H1 (cell line): ENCODE measurements at regions of chr19 and their contacts with region 1.

Region 1: GRCh38 chr19:4197625-4198466 is 15.4 kb downstream of the ANKRD24 start:
- DNase-seq: peak in 1 of 2 experiments; percentile 80
- H3K4me3 ChIP-seq: peak overlapping the region; percentile 23 to 87 (median 47); a peak in 7 of 8 replicates
- H3K27ac ChIP-seq: no peak overlapping the region
- H3K4me1 ChIP-seq: peaks cover 0 to 2% (median 0%) of the 10 kb centered on the region in 4 experiments; a peak in 3 of 7 replicates
- H3K27me3 ChIP-seq: peaks cover 0 to 7% (median 3%) of the 10 kb centered on the region in 4 experiments; a peak in 2 of 7 replicates
- CTCF ChIP-seq: no peak
- EP300 ChIP-seq: no peak; a peak in 1 of 3 replicates
- POLR2A ChIP-seq: no peak
- RAD21 ChIP-seq: no peak

Region 2: DNA sequence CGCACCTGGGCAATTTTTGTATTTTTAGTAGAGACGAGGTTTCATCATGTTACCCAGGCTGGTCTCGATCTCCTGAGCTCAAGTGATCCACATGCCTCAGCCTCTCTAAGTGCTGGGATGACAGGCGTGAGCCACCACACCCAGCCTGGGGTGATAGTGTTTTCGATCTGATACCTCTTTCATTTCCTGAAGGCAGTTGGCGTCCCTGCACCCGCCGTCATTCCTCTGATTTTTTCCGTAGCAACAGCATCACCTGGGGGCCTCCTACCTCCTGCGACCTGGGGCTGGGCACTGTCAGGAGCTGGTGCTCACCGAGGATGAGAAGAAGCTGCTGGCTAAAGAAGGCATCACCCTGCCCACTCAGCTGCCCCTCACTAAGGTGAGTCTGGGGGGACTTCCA is 33.6 kb before region 1 on chr19:
- CTCF ChIA-PET with region 1: interaction called, 91 read pairs
- POLR2A ChIA-PET with region 1: no interaction called
- DNase-seq: no peak
- H3K4me3 ChIP-seq: no peak overlapping the region
- H3K27ac ChIP-seq: no peak overlapping the region
- H3K4me1 ChIP-seq: no peaks in the 10 kb centered on the region
- H3K27me3 ChIP-seq: peaks cover 0 to 2% (median 0%) of the 10 kb centered on the region in 4 experiments; a peak in 2 of 7 replicates
- CTCF ChIP-seq: no peak
- EP300 ChIP-seq: no peak
- POLR2A ChIP-seq: no peak
- RAD21 ChIP-seq: no peak

Region 3: DNA sequence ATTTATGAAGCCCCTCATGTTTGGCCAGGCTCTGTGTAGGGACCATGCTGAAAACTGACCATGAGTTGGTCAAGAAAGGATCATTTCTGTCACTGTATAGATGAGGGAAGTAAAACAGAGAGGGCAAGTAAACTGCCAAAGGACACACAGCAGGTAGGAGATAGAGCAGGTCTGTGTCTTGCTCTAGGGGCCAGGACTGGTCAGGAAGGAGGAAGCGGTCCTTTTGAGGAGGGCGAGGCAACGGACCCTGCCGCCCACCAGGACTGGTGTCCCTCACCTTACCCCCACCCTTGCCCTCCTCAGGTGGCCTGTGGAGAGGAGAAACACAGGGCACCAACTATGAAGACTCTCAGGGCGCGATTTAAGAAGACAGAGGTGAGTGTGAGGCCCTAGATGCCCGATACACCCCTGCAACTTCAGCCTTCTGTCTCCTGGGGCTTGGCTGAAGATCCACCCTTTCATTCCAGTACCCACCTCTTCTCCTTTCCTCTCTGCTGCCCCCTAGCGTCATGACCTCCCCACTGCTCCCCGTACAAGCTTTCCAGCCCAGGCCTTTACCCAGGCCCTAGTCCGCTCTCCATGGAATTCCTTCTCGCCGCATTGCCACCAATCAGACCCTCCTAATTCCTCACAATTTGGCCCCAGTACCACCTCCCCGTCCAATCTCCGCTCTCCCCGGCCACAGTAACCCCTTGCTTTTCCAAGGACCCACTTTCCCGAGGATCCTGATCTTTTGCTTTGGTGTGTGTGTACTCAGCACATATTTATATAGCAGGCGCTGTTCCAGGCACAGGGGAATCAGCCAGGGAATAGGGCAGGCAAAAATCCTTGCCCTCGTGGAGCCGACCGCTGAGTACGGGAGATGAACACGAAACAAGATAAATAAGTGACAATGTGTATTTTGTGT is 11.5 kb before region 1 on chr19:
- CTCF ChIA-PET with region 1: interaction called, 14 read pairs
- POLR2A ChIA-PET with region 1: interaction called, 4 read pairs
- DNase-seq: peak; percentile 66 to 99
- H3K4me3 ChIP-seq: no peak overlapping the region
- H3K27ac ChIP-seq: no peak overlapping the region
- H3K4me1 ChIP-seq: peaks cover 0 to 3% (median under 1%) of the 10 kb centered on the region in 4 experiments; a peak in 3 of 7 replicates
- H3K27me3 ChIP-seq: 0 out of 7 replicates have a peak, but pooled peaks cover 0 to 2% (median 0%) of the 10 kb centered on the region in 4 experiments
- CTCF ChIP-seq: peak; percentile 77 to 97 (median 82)
- EP300 ChIP-seq: no peak
- POLR2A ChIP-seq: no peak
- RAD21 ChIP-seq: peak; percentile 55 to 68

Region 4: DNA sequence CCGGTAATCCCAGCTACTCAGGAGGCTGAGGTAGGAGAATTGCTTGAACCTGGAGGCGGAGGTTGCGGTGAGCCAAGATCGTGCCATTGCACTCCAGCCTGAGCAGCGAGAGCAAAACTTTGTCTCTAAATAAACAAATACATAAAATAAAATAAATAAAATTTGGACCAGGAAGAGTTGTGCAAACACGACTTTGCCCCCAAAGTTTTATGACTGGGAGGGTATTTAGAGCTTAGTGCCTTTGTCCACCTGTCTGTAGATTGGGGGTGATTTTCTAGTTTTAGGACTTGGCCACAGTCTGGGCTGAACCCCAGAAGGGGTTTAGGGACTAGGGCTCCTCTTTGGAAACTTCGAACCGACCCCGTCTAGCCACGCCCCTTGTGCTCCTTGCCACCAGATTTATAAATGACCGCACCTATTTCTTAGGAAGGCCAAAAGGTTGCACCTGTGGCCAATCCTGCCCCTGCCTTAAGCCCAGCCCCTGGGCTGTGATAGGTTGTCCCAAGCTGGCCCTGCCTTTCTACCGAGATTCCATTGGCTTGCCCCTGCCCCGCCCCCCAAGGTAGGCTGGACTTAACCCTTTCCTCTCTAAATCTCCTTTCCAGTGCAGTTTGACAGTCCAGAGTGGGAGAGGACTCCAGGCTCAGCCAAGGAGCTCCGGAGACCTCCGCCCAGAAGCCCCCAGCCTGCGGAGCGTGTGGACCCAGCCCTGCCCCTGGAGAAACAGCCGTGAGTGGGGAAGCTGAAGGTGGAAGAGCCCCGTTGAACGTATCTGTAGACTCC is 86.5 kb after region 1 on chr19:
- CTCF ChIA-PET with region 1: no interaction called
- POLR2A ChIA-PET with region 1: no interaction called
- DNase-seq: peak; percentile 71 to 89
- H3K4me3 ChIP-seq: peak overlapping the region; percentile 7 to 46 (median 16); a peak in 5 of 8 replicates
- H3K27ac ChIP-seq: no peak overlapping the region
- H3K4me1 ChIP-seq: peaks cover 0 to 4% (median 1%) of the 10 kb centered on the region in 4 experiments; a peak in 4 of 7 replicates
- H3K27me3 ChIP-seq: peaks cover 9 to 27% (median 23%) of the 10 kb centered on the region in 4 experiments
- CTCF ChIP-seq: no peak
- EP300 ChIP-seq: no peak
- POLR2A ChIP-seq: no peak
- RAD21 ChIP-seq: no peak

Region 5: GRCh38 chr19:4322942-4323665 is 125.3 kb after region 1 on chr19:
- CTCF ChIA-PET with region 1: no interaction called
- POLR2A ChIA-PET with region 1: no interaction called
- DNase-seq: no peak
- H3K4me3 ChIP-seq: no peak overlapping the region
- H3K27ac ChIP-seq: no peak overlapping the region
- H3K4me1 ChIP-seq: peaks cover 0 to 4% (median 2%) of the 10 kb centered on the region in 4 experiments; a peak in 4 of 7 replicates
- H3K27me3 ChIP-seq: no peaks in the 10 kb centered on the region
- CTCF ChIP-seq: no peak
- EP300 ChIP-seq: no peak
- POLR2A ChIP-seq: no peak
- RAD21 ChIP-seq: no peak

Region 6: GRCh38 chr19:4342615-4343369 is 144.9 kb after region 1 on chr19:
- CTCF ChIA-PET with region 1: no interaction called
- POLR2A ChIA-PET with region 1: no interaction called
- DNase-seq: peak; percentile 94 to 97
- H3K4me3 ChIP-seq: peak overlapping the region; percentile 66 to 92 (median 78)
- H3K27ac ChIP-seq: peak overlapping the region; percentile 96
- H3K4me1 ChIP-seq: peaks cover 0 to 16% (median 8%) of the 10 kb centered on the region in 4 experiments; a peak in 6 of 7 replicates
- H3K27me3 ChIP-seq: no peaks in the 10 kb centered on the region
- CTCF ChIP-seq: peak; percentile 23 to 50 (median 35); a peak in 3 of 4 replicates
- EP300 ChIP-seq: no peak
- POLR2A ChIP-seq: peak; percentile 93 to 99
- RAD21 ChIP-seq: peak; percentile 17 to 23; a peak in 2 of 4 replicates